IMR-90 (cell line): ENCODE measurements at regions of chr12 and their contacts with region 1.

Region 1: DNA sequence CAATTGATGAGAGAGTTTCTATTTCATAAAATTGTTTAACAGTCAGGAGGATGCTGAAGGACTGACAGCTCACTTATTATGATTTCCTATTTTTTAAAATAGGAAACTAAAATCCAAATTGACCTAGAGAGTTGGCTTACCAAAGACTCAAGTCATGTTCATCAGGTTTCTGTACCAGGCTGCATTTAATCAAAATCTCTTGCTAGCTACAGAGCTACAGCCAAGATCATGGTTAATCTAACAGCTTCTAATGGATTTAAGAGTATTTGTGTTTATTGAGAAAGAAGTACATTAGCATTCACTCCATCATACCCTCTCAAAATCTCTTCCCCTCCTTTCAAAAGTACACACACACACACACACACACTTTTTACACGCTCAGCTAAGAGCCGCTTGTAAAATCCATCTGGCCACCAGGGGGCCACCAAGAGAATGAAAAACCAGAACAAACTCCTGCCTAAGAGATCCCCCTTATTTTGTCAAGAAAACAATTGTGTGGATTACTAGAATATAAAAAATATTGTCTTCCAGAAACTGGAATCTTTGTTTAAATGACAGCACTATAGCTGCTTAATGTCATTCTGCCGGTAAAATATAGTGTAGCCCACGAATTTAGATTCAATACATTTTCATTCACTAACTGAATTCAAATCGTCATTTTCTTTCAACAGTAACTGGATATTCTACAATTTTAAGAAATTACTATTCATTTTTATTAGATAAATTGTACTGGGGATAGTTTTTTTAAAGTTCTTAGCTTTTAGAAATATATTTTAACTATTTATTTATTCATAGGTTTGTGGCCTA is 334.0 kb downstream of the BTG1 start:
- DNase-seq: peak; percentile 72
- ATAC-seq: peak; percentile 79
- H3K4me3 ChIP-seq: no peak overlapping the region
- H3K27ac ChIP-seq: no peak overlapping the region
- H3K4me1 ChIP-seq: no peaks in the 10 kb centered on the region
- H3K27me3 ChIP-seq: no peaks in the 10 kb centered on the region
- CTCF ChIP-seq: peak; percentile 69
- POLR2A ChIP-seq: no peak
- RAD21 ChIP-seq: peak; percentile 74

Region 2: GRCh38 chr12:91577586-91578539 is 233.8 kb before region 1 on chr12:
- CTCF ChIA-PET with region 1: no interaction called
- POLR2A ChIA-PET with region 1: no interaction called
- dilution Hi-C with region 1: no loop called
- in situ Hi-C with region 1: no loop called
- intact Hi-C with region 1: loop called (anchors 2 kb)
- DNase-seq: peak; percentile 35
- ATAC-seq: peak; percentile 74
- H3K4me3 ChIP-seq: peak overlapping the region; percentile 39; the same call in 1 of the 2 replicates
- H3K27ac ChIP-seq: no peak overlapping the region
- H3K4me1 ChIP-seq: no peaks in the 10 kb centered on the region
- H3K27me3 ChIP-seq: no peaks in the 10 kb centered on the region; the same call in 1 of the 2 replicates
- CTCF ChIP-seq: peak; percentile 59
- POLR2A ChIP-seq: no peak
- RAD21 ChIP-seq: peak; percentile 52

Region 3: GRCh38 chr12:92065018-92065499 is 253.4 kb after region 1 on chr12:
- CTCF ChIA-PET with region 1: interaction called, 3 read pairs
- POLR2A ChIA-PET with region 1: no interaction called
- dilution Hi-C with region 1: no loop called
- in situ Hi-C with region 1: no loop called
- intact Hi-C with region 1: loop called (anchors 10 kb)
- DNase-seq: peak; percentile 61
- ATAC-seq: peak; percentile 19
- H3K4me3 ChIP-seq: no peak overlapping the region
- H3K27ac ChIP-seq: peak overlapping the region; percentile 15; the same call in 1 of the 2 replicates
- H3K4me1 ChIP-seq: peaks cover 10% of the 10 kb centered on the region
- H3K27me3 ChIP-seq: no peaks in the 10 kb centered on the region
- CTCF ChIP-seq: no peak
- POLR2A ChIP-seq: no peak
- RAD21 ChIP-seq: no peak

Region 4: DNA sequence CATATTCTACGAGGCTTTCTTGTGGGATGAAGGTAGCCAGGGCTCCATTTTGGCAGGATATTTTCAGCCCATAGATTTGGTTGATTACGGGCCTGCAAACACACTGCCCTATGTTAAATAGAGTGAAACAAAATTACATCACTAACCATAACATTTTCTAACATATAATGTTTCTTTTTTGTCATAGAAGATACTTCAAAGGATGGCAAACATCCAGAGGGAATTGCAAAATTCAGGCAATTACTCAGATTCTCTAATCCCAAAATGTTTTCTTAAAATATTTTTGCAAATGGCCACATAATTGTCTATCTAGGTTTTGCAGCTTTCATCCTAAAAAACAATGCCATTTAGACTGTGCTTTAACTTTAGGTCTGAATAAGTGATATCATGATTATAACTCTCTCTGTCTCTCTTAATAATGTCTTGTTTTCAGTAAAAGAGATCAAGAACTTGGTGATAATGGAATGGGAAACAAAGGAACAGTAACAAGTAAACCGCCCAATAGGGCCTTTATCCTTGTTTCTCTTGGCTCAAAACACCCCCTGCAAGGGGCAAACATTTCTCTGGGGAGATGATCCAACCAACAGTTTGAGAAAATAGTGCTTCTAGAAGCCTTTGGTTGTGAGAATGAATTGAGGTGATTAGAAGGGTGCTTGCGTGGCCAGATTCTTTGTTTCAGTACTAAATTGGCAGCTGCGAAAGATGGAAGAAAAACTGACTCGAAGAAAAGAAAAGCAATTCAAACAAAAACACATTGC is 388.3 kb after region 1 on chr12:
- CTCF ChIA-PET with region 1: no interaction called
- POLR2A ChIA-PET with region 1: no interaction called
- dilution Hi-C with region 1: no loop called
- in situ Hi-C with region 1: no loop called
- intact Hi-C with region 1: no loop called
- DNase-seq: peak; percentile 6
- ATAC-seq: no peak
- H3K4me3 ChIP-seq: no peak overlapping the region
- H3K27ac ChIP-seq: no peak overlapping the region
- H3K4me1 ChIP-seq: no peaks in the 10 kb centered on the region
- H3K27me3 ChIP-seq: no peaks in the 10 kb centered on the region; the same call in 1 of the 2 replicates
- CTCF ChIP-seq: no peak
- POLR2A ChIP-seq: no peak
- RAD21 ChIP-seq: no peak

Region 5: GRCh38 chr12:92561543-92561899 is 749.8 kb after region 1 on chr12:
- CTCF ChIA-PET with region 1: no interaction called
- POLR2A ChIA-PET with region 1: no interaction called
- dilution Hi-C with region 1: no loop called
- in situ Hi-C with region 1: loop called (anchors 10 kb)
- intact Hi-C with region 1: no loop called
- DNase-seq: peak; percentile 91
- ATAC-seq: peak; percentile 88
- H3K4me3 ChIP-seq: no peak overlapping the region
- H3K27ac ChIP-seq: no peak overlapping the region
- H3K4me1 ChIP-seq: peaks cover 5% of the 10 kb centered on the region
- H3K27me3 ChIP-seq: no peaks in the 10 kb centered on the region
- CTCF ChIP-seq: no peak
- POLR2A ChIP-seq: no peak
- RAD21 ChIP-seq: no peak

Region 6: DNA sequence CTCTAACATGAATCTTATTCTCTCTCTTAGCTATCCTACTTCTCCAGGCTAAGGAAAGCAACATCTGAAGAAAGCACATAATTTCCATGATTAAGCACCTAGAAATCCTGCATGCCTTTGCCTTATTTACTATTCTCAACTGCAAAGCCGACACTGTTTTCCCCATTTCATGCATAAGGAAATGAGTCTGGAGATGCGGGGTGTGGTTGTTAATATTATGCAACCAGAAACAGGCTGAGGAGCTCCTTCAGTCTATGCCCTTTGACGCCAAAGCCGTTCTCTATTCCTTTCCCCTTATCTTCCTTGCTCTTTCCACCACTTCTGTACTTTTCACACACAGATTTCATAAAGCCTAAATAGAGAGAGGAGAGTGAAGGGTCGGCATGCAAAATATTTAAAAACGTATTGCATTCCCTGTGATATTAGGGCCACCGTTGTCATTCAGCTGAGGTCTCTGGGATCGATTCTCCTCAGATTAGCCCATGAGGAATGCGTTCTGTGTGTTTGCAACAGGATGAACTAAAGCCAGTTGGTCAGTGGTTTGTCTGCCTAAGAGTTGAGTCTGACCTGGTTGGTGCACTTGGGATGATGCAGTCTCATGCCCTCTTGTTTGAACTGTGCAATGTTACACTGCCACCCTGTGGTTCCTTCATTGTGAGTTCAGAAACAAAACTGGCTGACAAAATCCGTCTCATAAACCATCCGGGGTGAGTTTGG is 838.0 kb after region 1 on chr12:
- CTCF ChIA-PET with region 1: interaction called, 5 read pairs
- POLR2A ChIA-PET with region 1: no interaction called
- dilution Hi-C with region 1: no loop called
- in situ Hi-C with region 1: no loop called
- intact Hi-C with region 1: loop called (anchors 10 kb)
- DNase-seq: peak; percentile 90
- ATAC-seq: peak; percentile 99
- H3K4me3 ChIP-seq: no peak overlapping the region
- H3K27ac ChIP-seq: no peak overlapping the region
- H3K4me1 ChIP-seq: no peaks in the 10 kb centered on the region
- H3K27me3 ChIP-seq: no peaks in the 10 kb centered on the region
- CTCF ChIP-seq: peak; percentile 85
- POLR2A ChIP-seq: no peak
- RAD21 ChIP-seq: peak; percentile 94